Mammary epithelial cell (primary cell): ENCODE measurements at regions of chr3 and their contacts with region 1.

Region 1: GRCh38 chr3:127590593-127591477 is at the start of gene TPRA1:
- DNase-seq: peak; percentile 98
- H3K4me3 ChIP-seq: peak within 1 kb of the TSS; percentile 83 to 88 (median 87)
- H3K27ac ChIP-seq: peak within 1 kb of the TSS; percentile 91
- H3K4me1 ChIP-seq: peaks cover 21% of the 10 kb centered on the region
- H3K27me3 ChIP-seq: no peaks in the 10 kb centered on the region
- CTCF ChIP-seq: peak in 1 of 2 donors; percentile 36
- total RNA-seq, gene TPRA1: 30.3 to 44.5 TPM

Region 2: DNA sequence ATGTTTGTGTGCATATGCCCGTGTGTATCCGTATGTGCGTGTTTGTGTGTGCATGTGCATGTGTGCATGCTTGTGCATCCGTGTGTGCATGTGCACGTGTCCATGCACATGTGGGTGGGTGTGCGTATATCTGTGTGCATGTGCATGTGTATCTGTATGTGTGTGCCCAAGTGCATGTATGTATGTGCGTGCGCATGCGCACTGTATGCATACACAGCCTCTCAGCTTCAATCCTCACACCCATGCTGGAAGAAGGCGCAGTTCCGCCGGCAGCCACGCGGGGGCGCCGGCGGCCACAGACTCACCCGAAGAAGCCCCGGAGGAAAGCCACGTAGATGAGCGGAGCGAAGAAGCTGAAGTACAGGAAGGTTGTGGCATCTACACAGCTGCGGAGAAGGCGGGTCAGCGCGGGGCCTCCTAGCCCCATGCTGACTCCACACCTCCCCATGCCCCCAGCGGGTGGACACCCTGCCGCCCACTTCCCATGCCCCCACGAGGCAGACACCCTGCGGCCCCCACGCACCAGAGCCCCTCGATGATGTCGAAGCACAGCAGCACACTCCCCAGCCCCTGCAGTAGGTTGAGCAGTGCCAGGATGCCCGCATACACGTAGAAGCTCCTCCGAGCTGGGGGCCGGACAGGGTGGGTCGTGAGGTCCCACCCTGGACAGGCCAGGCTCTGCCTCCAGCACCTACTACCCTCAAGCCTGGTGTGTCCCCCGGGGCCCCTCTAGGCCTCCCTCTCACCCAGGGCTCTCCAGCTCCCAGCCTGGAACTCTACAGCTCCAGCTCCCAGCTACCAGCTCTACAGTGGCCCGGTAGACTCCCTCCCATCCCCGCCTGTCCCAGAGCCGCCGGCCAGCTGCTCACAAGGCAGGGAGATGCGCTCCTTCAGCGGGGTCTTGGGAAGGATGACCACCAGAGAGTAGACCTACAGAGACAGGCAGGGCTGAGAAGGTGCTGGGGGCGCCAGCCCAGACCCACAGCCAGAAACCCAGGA is 15.7 kb before region 1 on chr3:
- CTCF ChIA-PET with region 1: interaction called, 11 read pairs
- dilution Hi-C with region 1: no loop called
- in situ Hi-C with region 1: no loop called
- intact Hi-C with region 1: loop called (anchors 1 kb)
- DNase-seq: peak; percentile 82
- H3K4me3 ChIP-seq: no peak overlapping the region
- H3K27ac ChIP-seq: no peak overlapping the region
- H3K4me1 ChIP-seq: peaks cover 3% of the 10 kb centered on the region
- H3K27me3 ChIP-seq: no peaks in the 10 kb centered on the region
- CTCF ChIP-seq: peak; percentile 98 to 99

Region 3: DNA sequence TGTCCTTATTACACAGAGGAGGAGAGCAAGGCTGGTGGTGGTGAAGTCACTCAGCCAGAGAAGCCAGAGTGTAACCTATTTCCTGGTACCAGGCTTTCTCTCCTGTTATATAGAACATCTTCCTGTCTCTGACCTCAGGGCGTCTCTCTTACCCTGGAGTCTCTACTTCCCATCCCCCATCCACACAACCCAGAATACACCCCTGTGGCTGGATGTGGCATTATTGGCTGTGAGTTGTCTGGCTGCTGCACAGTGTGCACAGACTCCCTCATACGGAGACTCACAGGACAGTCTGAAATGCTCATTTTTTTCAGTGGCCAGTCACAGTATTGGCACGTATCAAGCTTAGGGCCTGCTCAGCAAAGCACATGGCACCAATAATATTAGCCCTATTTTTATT is 46.7 kb after region 1 on chr3:
- CTCF ChIA-PET with region 1: no interaction called
- dilution Hi-C with region 1: no loop called
- in situ Hi-C with region 1: no loop called
- intact Hi-C with region 1: no loop called
- DNase-seq: no peak
- H3K4me3 ChIP-seq: no peak overlapping the region
- H3K27ac ChIP-seq: no peak overlapping the region
- H3K4me1 ChIP-seq: peaks cover 3% of the 10 kb centered on the region
- H3K27me3 ChIP-seq: peaks cover 2% of the 10 kb centered on the region
- CTCF ChIP-seq: no peak

Region 4: DNA sequence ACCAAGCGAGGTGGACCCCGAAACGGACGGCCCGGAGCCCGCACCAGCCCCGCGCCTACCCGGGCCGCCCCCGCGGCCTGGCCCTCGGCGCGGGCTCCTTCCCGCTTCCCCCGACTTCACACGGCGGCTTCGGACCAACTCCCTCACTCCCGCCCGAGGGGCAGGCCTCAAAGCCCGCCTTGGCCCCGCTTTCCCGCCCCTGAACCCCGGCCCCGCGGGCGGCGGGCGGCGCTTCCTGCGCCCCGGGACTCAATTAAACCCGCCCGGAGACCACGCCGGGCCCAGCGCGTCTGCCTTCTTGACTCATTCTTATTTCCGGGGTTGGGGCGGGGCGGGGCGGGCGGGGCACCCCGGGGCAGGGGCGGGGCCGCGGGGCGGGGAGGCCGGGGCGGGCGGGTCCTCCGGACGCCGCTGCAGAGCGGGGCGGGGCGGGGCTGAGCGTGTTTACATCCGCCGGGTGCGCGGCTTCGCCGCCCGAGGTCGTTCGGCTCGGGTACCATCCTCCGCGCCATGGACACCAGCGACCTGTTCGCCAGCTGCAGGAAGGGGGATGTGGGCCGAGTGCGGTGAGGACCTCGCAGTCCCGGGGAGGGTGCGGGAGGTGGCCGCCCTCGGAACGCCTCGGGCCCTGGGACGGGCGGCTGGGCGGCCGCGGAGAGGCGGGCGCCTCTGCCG is 81.8 kb after region 1 on chr3 and contains the start of gene ABTB1:
- CTCF ChIA-PET with region 1: no interaction called
- dilution Hi-C with region 1: no loop called
- in situ Hi-C with region 1: no loop called
- intact Hi-C with region 1: loop called (anchors 5 kb)
- DNase-seq: peak; percentile 65
- H3K4me3 ChIP-seq: peak within 1 kb of the TSS; percentile 80 to 95 (median 89)
- H3K27ac ChIP-seq: peak within 1 kb of the TSS; percentile 77
- H3K4me1 ChIP-seq: peaks cover 17% of the 10 kb centered on the region
- H3K27me3 ChIP-seq: no peaks in the 10 kb centered on the region
- CTCF ChIP-seq: no peak
- total RNA-seq, gene ABTB1: 4.3 to 14.7 TPM

Region 5: GRCh38 chr3:127697551-127698240 is 106.9 kb after region 1 on chr3:
- CTCF ChIA-PET with region 1: no interaction called
- dilution Hi-C with region 1: no loop called
- in situ Hi-C with region 1: no loop called
- intact Hi-C with region 1: loop called (anchors 1 kb)
- DNase-seq: peak; percentile 33
- H3K4me3 ChIP-seq: no peak overlapping the region
- H3K27ac ChIP-seq: no peak overlapping the region
- H3K4me1 ChIP-seq: peaks cover 7% of the 10 kb centered on the region
- H3K27me3 ChIP-seq: no peaks in the 10 kb centered on the region
- CTCF ChIP-seq: no peak

Region 6: DNA sequence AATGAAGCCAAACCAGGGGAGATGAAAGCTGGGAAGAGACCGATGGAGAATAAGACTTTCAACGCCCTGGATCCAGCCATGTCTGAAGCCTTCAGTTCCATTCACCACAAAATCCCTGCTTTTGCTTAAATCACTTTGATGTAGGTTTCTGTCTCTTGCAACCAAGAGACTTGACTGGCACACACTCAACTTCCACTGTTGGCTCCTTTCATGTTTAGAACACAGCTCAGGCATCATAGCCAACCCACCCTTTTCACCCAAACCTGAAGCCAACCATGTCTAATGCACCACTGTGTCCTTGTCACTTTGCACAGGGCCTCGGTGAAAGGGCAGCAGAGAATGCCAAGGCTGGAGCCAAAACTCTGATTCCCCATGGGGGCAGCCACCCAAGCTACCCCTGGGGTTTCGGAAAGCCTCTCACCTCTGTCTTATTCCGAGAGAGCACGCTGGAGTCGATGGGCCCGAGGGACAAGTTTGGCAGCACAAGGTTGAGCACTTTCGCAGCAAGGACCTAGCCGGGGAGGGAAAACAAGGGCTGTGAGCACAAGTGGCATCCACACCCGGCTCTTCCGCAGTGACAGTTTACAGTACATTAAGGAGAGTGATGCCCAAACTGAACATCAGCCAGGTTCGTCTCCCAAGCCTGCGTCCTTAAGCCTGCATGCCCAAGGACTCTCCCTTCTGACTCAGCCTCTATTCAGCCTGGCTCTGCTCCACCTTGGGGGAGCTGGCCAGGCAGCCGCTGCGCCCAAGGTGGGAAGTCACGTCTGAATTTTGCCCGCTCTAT is 119.5 kb after region 1 on chr3:
- CTCF ChIA-PET with region 1: no interaction called
- dilution Hi-C with region 1: no loop called
- in situ Hi-C with region 1: no loop called
- intact Hi-C with region 1: no loop called
- DNase-seq: peak; percentile 10
- H3K4me3 ChIP-seq: no peak overlapping the region
- H3K27ac ChIP-seq: no peak overlapping the region
- H3K4me1 ChIP-seq: peaks cover 6% of the 10 kb centered on the region
- H3K27me3 ChIP-seq: no peaks in the 10 kb centered on the region
- CTCF ChIP-seq: no peak

Region 7: GRCh38 chr3:127817396-127817841 is 226.6 kb after region 1 on chr3:
- CTCF ChIA-PET with region 1: interaction called, 3 read pairs
- dilution Hi-C with region 1: no loop called
- in situ Hi-C with region 1: no loop called
- intact Hi-C with region 1: loop called (anchors 1 kb)
- DNase-seq: peak; percentile 93
- H3K4me3 ChIP-seq: no peak overlapping the region
- H3K27ac ChIP-seq: peak overlapping the region; percentile 80
- H3K4me1 ChIP-seq: peaks cover 42% of the 10 kb centered on the region
- H3K27me3 ChIP-seq: no peaks in the 10 kb centered on the region
- CTCF ChIP-seq: no peak

Region 8: DNA sequence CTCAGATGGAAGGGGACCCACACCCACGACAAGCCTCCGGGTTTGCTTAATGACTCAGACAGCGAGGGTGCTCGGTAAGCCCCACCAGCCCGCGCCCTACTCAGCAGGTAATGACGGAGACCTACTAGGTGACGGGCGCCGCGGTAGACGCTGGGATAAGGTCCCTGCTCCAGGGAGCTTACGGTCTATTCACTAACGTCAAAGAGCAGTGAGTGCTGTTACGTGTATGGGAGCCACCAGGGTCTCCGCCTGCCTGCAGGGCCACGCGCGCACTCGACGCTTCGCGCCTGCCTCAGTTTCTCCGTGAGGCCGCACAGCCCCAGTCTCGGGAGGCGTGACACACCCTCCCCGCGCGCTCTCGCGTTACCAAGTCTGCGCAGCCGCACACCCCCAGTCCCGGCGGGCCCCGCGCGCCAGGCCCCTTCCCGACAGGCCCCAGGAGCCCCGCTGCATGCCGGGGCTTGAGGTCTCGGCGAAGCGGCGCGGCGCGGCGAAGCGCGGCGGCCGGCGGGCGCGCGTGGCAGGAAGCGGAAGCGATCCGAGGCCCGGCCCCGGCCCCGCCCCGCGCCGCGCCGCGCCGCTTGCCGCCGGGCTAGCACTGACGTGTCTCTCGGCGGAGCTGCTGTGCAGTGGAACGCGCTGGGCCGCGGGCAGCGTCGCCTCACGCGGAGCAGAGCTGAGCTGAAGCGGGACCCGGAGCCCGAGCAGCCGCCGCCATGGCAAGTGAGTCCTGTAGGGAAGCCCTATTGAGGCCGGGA is 461.2 kb after region 1 on chr3 and contains the start of gene SEC61A1:
- CTCF ChIA-PET with region 1: no interaction called
- dilution Hi-C with region 1: no loop called
- in situ Hi-C with region 1: no loop called
- intact Hi-C with region 1: loop called (anchors 2 kb)
- DNase-seq: peak; percentile 95
- H3K4me3 ChIP-seq: peak within 1 kb of the TSS; percentile 87 to 97 (median 89)
- H3K27ac ChIP-seq: peak within 1 kb of the TSS; percentile 92
- H3K4me1 ChIP-seq: peaks cover 34% of the 10 kb centered on the region
- H3K27me3 ChIP-seq: no peaks in the 10 kb centered on the region
- CTCF ChIP-seq: no peak
- total RNA-seq, gene SEC61A1: 291 to 353 TPM

Region 9: DNA sequence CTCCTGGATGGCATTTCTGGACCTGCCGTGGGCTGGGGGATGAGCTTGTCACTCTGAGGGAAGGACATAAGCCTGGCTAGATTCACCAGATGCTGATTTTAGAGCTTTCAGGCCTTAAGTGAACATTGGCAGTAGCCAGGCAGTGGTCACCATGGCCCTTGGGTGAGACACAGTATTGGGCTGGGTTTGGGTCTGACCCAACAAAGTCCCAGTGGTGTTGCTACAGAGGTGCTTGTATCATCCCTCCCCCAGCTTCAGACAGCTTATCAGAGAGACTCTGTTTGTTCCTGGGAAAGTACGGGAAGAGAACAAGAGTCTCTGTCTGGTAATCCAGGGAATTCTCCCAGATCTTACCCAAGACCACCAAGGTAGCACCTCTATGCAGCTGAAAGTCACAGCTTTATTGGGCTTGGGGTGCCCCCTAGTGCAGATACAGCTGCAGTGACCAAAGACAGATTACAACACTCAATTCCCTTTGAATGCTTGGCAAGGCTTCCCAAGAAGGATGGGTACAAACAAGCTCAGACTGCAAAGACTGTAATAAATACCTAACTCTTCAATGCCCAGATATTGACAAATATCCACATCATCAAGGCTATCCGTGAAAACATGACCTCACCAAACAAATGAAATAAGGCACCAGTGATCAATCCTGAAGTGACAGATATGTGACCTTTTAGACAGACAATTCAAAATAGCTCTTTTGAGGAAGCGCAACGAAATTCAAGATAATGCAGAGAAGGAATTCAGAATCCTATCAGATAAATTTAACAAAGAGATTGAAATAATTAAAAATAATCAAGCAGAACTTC is 542.6 kb after region 1 on chr3:
- CTCF ChIA-PET with region 1: no interaction called
- dilution Hi-C with region 1: no loop called
- in situ Hi-C with region 1: no loop called
- intact Hi-C with region 1: loop called (anchors 2 kb)
- DNase-seq: peak; percentile 39
- H3K4me3 ChIP-seq: no peak overlapping the region
- H3K27ac ChIP-seq: no peak overlapping the region
- H3K4me1 ChIP-seq: no peaks in the 10 kb centered on the region
- H3K27me3 ChIP-seq: no peaks in the 10 kb centered on the region
- CTCF ChIP-seq: peak; percentile 41 to 66